CD4-positive, alpha-beta T cell (primary cell): ENCODE measurements at regions of chr12 and their contacts with region 1.

Region 1: DNA sequence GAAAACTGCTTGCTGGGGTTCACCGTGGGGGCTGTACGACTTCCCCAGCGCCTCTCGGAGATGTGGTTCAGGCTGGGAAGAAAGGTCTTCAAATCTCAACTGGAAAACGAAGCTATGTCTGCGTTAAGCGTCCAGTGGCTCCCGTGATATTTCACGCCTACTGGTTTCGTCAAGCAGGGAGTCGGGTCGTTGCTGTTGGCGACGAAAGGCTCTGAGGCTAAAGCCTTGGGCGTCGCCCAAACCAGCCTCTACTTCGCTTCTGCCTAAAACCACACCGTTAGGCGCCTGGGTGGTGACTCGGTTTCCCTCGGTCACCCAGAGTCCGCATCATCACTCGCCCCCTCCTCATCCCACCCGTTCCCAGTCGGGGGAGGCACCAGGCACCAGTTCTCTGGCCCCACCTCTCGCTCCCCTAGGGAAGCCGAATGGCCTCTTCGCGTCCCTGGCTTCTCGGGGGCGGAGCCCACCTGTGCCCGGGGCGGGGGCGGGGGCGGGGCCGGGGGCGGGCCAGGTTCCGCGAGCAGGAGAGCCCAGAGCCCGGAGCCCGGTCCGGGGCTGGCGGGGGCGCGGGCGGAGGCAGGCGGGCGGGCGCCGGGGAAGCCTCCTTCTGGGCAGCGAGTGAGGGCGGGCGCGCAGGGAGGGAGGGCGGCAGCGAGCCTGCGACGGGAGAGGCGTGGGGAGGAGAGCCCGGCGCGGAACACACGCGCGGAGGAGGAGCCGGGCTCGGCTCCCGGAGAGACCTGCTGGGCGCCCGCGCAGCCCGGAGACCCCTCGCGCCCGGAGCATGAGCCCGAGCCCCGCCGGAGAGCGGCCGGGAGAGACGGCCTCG is at the start of gene B4GALNT3:
- DNase-seq: peak in 13 of 14 experiments; percentile 6 to 78 (median 28)
- ATAC-seq: peak; percentile 64
- H3K4me3 ChIP-seq: peak within 1 kb of the TSS; percentile 63
- H3K4me3 Mint-ChIP-seq: peak within 1 kb of the TSS; percentile 84
- H3K27ac ChIP-seq: no peak within 1 kb of the TSS
- H3K27ac Mint-ChIP-seq: no peak within 1 kb of the TSS
- H3K4me1 ChIP-seq: peaks cover 21% of the 10 kb centered on the region
- H3K4me1 Mint-ChIP-seq: peaks cover 20% of the 10 kb centered on the region
- H3K27me3 ChIP-seq: peaks cover 4 to 7% of the 10 kb centered on the region in 2 experiments
- H3K27me3 Mint-ChIP-seq: peaks cover 4% of the 10 kb centered on the region
- CTCF ChIP-seq: no peak
- total RNA-seq, gene B4GALNT3: 1.4 to 1.8 TPM

Region 2: GRCh38 chr12:480831-481816 is 21.5 kb after region 1 on chr12:
- CTCF ChIA-PET with region 1: no interaction called
- POLR2A ChIA-PET with region 1: no interaction called
- intact Hi-C with region 1: no loop called
- DNase-seq: no peak
- ATAC-seq: no peak
- H3K4me3 ChIP-seq: no peak overlapping the region
- H3K4me3 Mint-ChIP-seq: no peak overlapping the region
- H3K27ac ChIP-seq: no peak overlapping the region
- H3K27ac Mint-ChIP-seq: no peak overlapping the region
- H3K4me1 ChIP-seq: no peaks in the 10 kb centered on the region
- H3K4me1 Mint-ChIP-seq: no peaks in the 10 kb centered on the region
- H3K27me3 ChIP-seq: no peaks in the 10 kb centered on the region
- H3K27me3 Mint-ChIP-seq: peaks cover 41% of the 10 kb centered on the region
- CTCF ChIP-seq: no peak

Region 3: GRCh38 chr12:538731-539539 is 79.3 kb after region 1 on chr12:
- CTCF ChIA-PET with region 1: no interaction called
- POLR2A ChIA-PET with region 1: no interaction called
- intact Hi-C with region 1: loop called in 1 of 2 experiments (anchors 2 kb)
- DNase-seq: peak in 11 of 14 experiments; percentile 25 to 90 (median 53)
- ATAC-seq: peak; percentile 94
- H3K4me3 ChIP-seq: no peak overlapping the region
- H3K4me3 Mint-ChIP-seq: peak overlapping the region; percentile 32
- H3K27ac ChIP-seq: peak overlapping the region in 1 of 2 donors; percentile 29
- H3K27ac Mint-ChIP-seq: peak overlapping the region; percentile 44
- H3K4me1 ChIP-seq: peaks cover 37% of the 10 kb centered on the region
- H3K4me1 Mint-ChIP-seq: peaks cover 26% of the 10 kb centered on the region
- H3K27me3 ChIP-seq: no peaks in the 10 kb centered on the region
- H3K27me3 Mint-ChIP-seq: no peaks in the 10 kb centered on the region
- CTCF ChIP-seq: no peak

Region 4: DNA sequence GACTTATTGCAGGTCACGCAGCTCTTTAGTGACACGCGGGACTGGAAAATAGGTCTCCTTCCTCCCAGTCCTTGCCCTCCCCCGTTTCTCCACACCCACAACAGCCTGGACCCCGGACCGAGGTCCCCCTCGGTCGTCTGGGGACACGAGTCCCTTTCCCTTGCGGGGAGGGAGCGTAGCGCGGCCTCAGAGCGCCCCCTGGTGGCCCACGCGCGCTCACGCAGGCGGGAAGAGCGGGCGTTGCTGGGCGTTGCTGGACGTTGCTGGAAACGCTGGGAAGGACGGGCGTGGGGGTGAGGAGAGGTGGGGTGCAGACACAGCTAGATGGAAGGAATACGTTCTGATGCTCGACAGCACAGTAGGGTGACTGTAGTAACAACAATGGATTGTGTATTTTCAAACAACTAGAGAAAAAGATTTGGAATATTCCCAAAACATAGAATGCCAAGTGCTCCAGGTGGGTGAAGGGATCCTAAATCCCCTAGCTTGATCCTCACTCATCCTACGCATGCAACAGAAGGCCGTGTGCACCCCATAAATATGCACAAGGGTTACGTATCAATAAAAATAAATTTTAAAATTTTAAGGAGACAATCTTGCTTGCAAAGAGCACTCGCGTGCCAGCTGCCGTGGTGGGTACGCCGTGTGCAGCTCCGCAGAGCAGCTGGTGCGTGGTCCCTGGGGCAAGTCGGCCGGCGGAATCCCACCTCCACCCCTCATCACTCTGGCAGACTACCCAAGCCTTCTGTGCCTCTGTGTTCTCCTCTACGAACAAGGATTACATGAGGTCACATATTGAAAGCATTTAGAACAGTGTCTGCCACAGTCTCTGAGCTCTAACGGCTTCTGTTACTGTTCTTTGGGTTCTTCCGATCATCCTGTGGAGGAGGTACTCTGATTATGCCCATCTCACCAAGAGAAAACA is 87.5 kb after region 1 on chr12:
- CTCF ChIA-PET with region 1: interaction called, 4 read pairs
- POLR2A ChIA-PET with region 1: no interaction called
- intact Hi-C with region 1: loop called (anchors 2 kb)
- DNase-seq: peak; percentile 39 to 84 (median 64)
- ATAC-seq: peak; percentile 80
- H3K4me3 ChIP-seq: no peak overlapping the region
- H3K4me3 Mint-ChIP-seq: no peak overlapping the region
- H3K27ac ChIP-seq: no peak overlapping the region
- H3K27ac Mint-ChIP-seq: no peak overlapping the region
- H3K4me1 ChIP-seq: peaks cover 30% of the 10 kb centered on the region
- H3K4me1 Mint-ChIP-seq: peaks cover 47% of the 10 kb centered on the region
- H3K27me3 ChIP-seq: peaks cover 4 to 8% of the 10 kb centered on the region in 2 experiments
- H3K27me3 Mint-ChIP-seq: peaks cover 12% of the 10 kb centered on the region
- CTCF ChIP-seq: peak; percentile 98